ENCODE measurements at regions of chr7 and their contacts with region 1.

Region 1: DNA sequence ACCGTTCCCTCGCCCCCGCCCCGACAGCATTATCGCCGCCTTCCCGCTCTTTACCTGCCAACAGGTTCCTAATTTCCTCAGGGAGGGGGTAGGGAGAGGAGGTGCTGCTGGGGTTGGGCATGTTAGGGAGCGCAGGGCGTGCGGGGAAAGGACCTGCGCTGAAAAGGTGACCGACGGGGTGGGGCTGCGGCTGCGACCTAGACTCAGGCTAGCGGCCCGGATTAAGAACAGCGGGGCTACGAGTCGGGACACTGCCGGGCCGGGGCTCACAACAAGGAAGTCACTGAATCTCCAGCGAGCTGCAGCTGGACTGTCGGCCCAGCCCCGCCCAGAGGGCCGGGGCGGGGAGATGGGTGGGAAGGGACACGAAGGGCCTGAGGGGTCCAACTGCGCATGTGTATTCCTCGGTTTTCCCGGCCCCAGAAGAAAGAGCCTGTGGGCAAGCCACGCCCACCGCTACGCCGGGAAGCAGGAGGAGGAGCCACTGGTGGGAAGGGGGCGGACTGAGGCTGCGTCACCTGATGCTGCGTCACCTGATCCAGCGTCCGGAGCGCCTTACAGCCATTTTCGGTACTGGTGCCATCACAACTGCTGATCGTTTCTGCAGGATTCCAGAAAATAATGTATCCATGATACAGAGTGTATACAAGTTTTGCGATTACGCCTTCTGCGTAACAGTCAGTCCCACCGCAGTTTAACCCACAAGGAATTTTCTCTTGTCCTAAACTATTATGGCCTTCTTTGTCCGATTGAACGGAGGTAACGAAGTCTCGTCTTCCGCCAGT is at the start of gene SKAP2:
- DNase-seq: peak; percentile 99
- H3K4me3 Mint-ChIP-seq: peak within 1 kb of the TSS; percentile 97
- H3K27ac Mint-ChIP-seq: peak within 1 kb of the TSS; percentile 96
- H3K4me1 Mint-ChIP-seq: peaks cover 31% of the 10 kb centered on the region
- H3K27me3 Mint-ChIP-seq: no peaks in the 10 kb centered on the region
- CTCF ChIP-seq: no peak
- total RNA-seq, gene SKAP2: 24.8 and 27.5 TPM in 2 replicates

Region 2: GRCh38 chr7:26200444-26201246 is 663.9 kb before region 1 on chr7 and contains the start of gene HNRNPA2B1:
- CTCF ChIA-PET with region 1: no interaction called
- POLR2A ChIA-PET with region 1: interaction called, 10 read pairs
- intact Hi-C with region 1: no loop called
- DNase-seq: peak; percentile 98
- H3K4me3 Mint-ChIP-seq: peak within 1 kb of the TSS; percentile 98
- H3K27ac Mint-ChIP-seq: peak within 1 kb of the TSS; percentile 99
- H3K4me1 Mint-ChIP-seq: peaks cover 37% of the 10 kb centered on the region
- H3K27me3 Mint-ChIP-seq: no peaks in the 10 kb centered on the region
- CTCF ChIP-seq: no peak
- total RNA-seq, gene HNRNPA2B1: 592 and 646 TPM in 2 replicates

Region 3: DNA sequence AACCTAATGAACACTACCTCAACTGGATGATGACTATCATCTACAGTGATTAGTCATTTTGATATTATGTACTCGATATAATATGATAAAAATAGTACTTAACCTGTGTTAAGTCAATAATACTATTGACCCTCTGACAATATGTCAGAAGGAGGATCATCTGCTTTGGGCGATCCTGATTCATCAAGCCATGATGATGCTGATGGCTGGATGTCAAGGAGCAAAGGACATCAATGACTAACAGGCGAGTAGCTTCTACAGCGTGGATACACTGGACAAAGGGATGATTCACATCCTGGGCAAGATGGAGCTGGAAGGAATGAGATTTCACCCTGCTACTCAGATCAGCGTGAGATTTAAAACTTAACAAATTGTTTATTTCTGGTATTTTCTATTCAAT is 94.3 kb after region 1 on chr7:
- CTCF ChIA-PET with region 1: no interaction called
- POLR2A ChIA-PET with region 1: interaction called, 4 read pairs
- intact Hi-C with region 1: loop called (anchors 1 kb)
- DNase-seq: peak; percentile 85
- H3K4me3 Mint-ChIP-seq: no peak overlapping the region
- H3K27ac Mint-ChIP-seq: no peak overlapping the region
- H3K4me1 Mint-ChIP-seq: peaks cover 14% of the 10 kb centered on the region
- H3K27me3 Mint-ChIP-seq: no peaks in the 10 kb centered on the region
- CTCF ChIP-seq: no peak

Region 4: GRCh38 chr7:27106181-27106900 is 241.8 kb after region 1 on chr7:
- CTCF ChIA-PET with region 1: interaction called, 198 read pairs
- POLR2A ChIA-PET with region 1: interaction called, 663 read pairs
- intact Hi-C with region 1: no loop called
- DNase-seq: peak; percentile 42
- H3K4me3 Mint-ChIP-seq: peak overlapping the region; percentile 87
- H3K27ac Mint-ChIP-seq: peak overlapping the region; percentile 99
- H3K4me1 Mint-ChIP-seq: peaks cover 38% of the 10 kb centered on the region
- H3K27me3 Mint-ChIP-seq: no peaks in the 10 kb centered on the region
- CTCF ChIP-seq: no peak

Region 5: GRCh38 chr7:27124096-27124901 is 259.8 kb after region 1 on chr7:
- CTCF ChIA-PET with region 1: interaction called, 11 read pairs
- POLR2A ChIA-PET with region 1: interaction called, 395 read pairs
- intact Hi-C with region 1: no loop called
- DNase-seq: no peak
- H3K4me3 Mint-ChIP-seq: peak overlapping the region; percentile 29
- H3K27ac Mint-ChIP-seq: no peak overlapping the region
- H3K4me1 Mint-ChIP-seq: peaks cover 20% of the 10 kb centered on the region
- H3K27me3 Mint-ChIP-seq: no peaks in the 10 kb centered on the region
- CTCF ChIP-seq: no peak

Region 6: GRCh38 chr7:27160546-27161213 is 296.2 kb after region 1 on chr7:
- CTCF ChIA-PET with region 1: interaction called, 3 read pairs
- POLR2A ChIA-PET with region 1: interaction called, 18 read pairs
- intact Hi-C with region 1: no loop called
- DNase-seq: peak; percentile 83
- H3K4me3 Mint-ChIP-seq: peak overlapping the region; percentile 84
- H3K27ac Mint-ChIP-seq: no peak overlapping the region
- H3K4me1 Mint-ChIP-seq: peaks cover 8% of the 10 kb centered on the region
- H3K27me3 Mint-ChIP-seq: no peaks in the 10 kb centered on the region
- CTCF ChIP-seq: peak; percentile 96